ENCODE measurements at regions of chr15 and their contacts with region 1.

Region 1: DNA sequence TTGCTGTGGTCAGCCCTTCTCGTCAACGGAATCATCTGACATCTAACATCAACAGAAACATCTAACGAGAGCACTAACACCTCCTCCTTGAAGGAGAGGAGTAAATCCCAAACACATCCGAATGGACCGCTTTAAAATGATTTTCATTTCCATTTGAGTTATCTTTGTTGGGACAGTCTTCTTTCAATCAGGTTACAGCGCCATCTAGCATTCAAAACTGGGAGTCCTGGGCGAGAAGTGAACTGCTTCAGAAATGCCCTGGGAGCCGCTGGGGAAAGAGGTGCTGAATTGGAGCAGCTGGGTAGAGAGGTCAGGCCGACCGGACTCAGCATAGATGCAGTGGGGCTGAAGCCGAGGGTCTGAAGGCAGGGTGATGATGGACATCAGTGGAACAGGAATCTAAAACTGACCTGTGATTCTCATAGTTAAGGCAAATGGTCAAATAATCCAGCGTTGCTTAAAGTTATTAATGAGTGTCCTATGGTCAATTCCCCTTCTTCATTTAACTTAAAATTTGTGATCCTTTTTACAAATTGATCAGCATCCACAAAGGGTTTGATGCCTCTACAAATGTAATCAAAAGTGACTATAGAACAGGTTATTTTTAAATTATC is 170.0 kb upstream of the NDN start:
- DNase-seq: no peak
- H3K4me3 ChIP-seq: no peak overlapping the region
- H3K27ac ChIP-seq: no peak overlapping the region
- H3K4me1 ChIP-seq: no peaks in the 10 kb centered on the region
- H3K27me3 ChIP-seq: peaks cover 0 to 28% (median 0%) of the 10 kb centered on the region in 4 donors
- CTCF ChIP-seq: peak in 1 of 3 experiments; percentile 21
- EP300 ChIP-seq: no peak
- POLR2A ChIP-seq: no peak

Region 2: GRCh38 chr15:23642413-23643044 is 214.6 kb before region 1 on chr15:
- intact Hi-C with region 1: loop called (anchors 5 kb)
- DNase-seq: no peak
- H3K4me3 ChIP-seq: no peak overlapping the region
- H3K27ac ChIP-seq: no peak overlapping the region
- H3K4me1 ChIP-seq: peaks cover 0 to 6% (median 6%) of the 10 kb centered on the region in 4 donors
- H3K27me3 ChIP-seq: peaks cover 0 to 42% (median 4%) of the 10 kb centered on the region in 4 donors
- CTCF ChIP-seq: peak; percentile 67 to 90 (median 81)
- EP300 ChIP-seq: no peak
- POLR2A ChIP-seq: no peak

Region 3: DNA sequence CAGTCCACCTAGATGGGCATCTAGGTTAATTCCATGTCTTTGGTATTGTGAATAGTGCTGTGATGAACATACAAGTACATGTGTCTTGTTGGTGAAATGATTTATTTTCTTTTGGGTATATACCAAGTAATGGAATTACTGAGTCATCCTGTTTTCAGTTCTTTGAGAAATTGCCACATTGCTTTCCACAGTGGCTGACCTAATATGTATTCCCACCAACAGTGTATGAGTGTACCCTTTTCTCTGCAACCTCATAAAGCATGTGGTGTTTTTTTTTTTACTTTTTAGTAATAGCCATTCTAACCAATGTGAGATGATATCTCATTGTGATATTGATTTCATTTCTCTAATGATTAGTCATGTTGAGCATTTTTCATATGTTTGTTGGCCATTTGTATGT is 84.0 kb before region 1 on chr15:
- intact Hi-C with region 1: loop called (anchors 10 kb)
- DNase-seq: no peak
- H3K4me3 ChIP-seq: no peak overlapping the region
- H3K27ac ChIP-seq: no peak overlapping the region
- H3K4me1 ChIP-seq: no peaks in the 10 kb centered on the region
- H3K27me3 ChIP-seq: no peaks in the 10 kb centered on the region
- CTCF ChIP-seq: no peak
- EP300 ChIP-seq: no peak
- POLR2A ChIP-seq: no peak